ENCODE measurements at regions of chr1 and their contacts with region 1.

Region 1: GRCh38 chr1:85894651-85895050 is 186.4 kb upstream of the ZNHIT6 start:
- DNase-seq: peak; percentile 15
- H3K4me3 ChIP-seq: no peak overlapping the region
- H3K27ac ChIP-seq: no peak overlapping the region
- H3K27me3 ChIP-seq: no peaks in the 10 kb centered on the region
- CTCF ChIP-seq: peak; percentile 70

Region 2: GRCh38 chr1:85911742-85912141 is 17.1 kb after region 1 on chr1:
- CTCF ChIA-PET with region 1: interaction called, 11 read pairs
- POLR2A ChIA-PET with region 1: no interaction called
- DNase-seq: no peak
- H3K4me3 ChIP-seq: no peak overlapping the region
- H3K27ac ChIP-seq: no peak overlapping the region
- H3K27me3 ChIP-seq: no peaks in the 10 kb centered on the region
- CTCF ChIP-seq: peak; percentile 44

Region 3: GRCh38 chr1:86356247-86356646 is 461.6 kb after region 1 on chr1:
- CTCF ChIA-PET with region 1: interaction called, 11 read pairs
- POLR2A ChIA-PET with region 1: no interaction called
- DNase-seq: no peak
- H3K4me3 ChIP-seq: no peak overlapping the region
- H3K27ac ChIP-seq: no peak overlapping the region
- H3K27me3 ChIP-seq: no peaks in the 10 kb centered on the region
- CTCF ChIP-seq: peak; percentile 22; the same call in 1 of the 2 replicates

Measured in AG04450 (cell line).